Heart right ventricle (tissue), 16 donors: ENCODE measurements at regions of chr7 and their contacts with region 1.

Region 1: DNA sequence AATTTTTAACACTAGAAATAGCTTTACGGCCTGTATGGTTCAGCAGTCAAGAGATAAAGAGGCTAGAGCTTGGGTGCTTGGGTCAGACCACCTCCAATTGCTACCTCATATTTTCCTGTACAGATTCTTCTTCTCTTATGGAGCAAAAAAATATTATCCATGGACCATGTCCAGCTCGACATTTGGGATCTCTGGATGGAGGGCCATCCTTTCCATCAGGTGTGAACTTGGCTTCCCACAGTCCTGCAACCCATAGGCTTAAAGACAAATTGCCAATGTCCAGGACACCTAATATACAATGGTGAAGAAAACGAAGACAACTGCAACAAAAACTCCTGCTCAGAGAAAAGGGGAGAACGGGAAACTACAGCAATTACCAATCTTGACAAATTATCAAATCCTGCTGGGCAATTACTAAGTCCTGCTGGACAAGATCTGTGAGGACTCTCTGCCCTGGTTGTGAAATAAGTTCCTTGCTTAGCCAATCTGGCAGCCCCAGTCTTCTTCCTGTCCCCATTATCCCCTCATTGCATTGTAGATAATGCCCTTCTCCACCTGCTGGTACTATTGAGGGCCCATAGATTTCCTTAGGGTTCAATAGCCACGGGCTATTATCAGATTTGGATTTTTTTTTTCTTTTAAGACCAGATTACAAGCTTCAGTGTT is 42.0 kb upstream of the BRAF start:
- DNase-seq: no peak
- ATAC-seq: no peak
- H3K4me3 ChIP-seq: no peak overlapping the region
- H3K27ac ChIP-seq: no peak overlapping the region
- H3K4me1 ChIP-seq: no peaks in the 10 kb centered on the region
- H3K27me3 ChIP-seq: no peaks in the 10 kb centered on the region
- CTCF ChIP-seq: no peak

Region 2: DNA sequence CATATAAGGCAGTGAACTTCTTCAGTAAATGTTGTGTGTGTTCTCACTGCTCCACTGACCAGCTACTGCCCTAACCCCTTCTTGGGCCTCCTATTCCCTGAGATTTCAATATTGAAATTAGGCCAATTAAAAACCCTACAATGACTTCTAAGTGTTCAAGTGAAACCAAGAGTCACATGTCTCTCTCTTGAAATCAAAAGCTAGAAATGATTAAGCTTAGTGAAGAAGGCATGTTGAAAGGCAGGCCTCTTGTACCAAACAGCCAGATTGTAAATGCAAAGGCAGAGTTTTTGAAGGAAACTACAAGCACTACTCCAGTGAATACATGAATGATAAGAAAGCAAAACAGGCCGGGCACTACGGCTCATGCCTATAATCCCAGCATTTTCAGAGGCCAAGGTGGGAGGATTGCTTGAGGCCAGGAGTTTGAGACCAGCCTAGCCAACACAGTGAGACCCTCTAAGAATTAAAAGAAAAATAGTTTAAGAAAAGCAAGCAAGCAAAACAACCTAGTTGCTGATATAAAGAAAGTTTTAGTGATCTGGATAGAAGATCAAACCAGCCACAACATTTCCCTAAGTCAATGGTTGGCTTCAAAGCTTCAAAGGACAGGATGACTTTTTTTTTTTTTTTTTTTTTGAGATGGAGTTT is 64.3 kb before region 1 on chr7:
- intact Hi-C with region 1: loop called in 1 of 10 experiments (anchors 10 kb)
- DNase-seq: no peak
- ATAC-seq: no peak
- H3K4me3 ChIP-seq: no peak overlapping the region
- H3K27ac ChIP-seq: no peak overlapping the region
- H3K4me1 ChIP-seq: peaks cover 0 to 37% (median 17%) of the 10 kb centered on the region in 9 donors
- H3K27me3 ChIP-seq: no peaks in the 10 kb centered on the region
- CTCF ChIP-seq: no peak

Region 3: DNA sequence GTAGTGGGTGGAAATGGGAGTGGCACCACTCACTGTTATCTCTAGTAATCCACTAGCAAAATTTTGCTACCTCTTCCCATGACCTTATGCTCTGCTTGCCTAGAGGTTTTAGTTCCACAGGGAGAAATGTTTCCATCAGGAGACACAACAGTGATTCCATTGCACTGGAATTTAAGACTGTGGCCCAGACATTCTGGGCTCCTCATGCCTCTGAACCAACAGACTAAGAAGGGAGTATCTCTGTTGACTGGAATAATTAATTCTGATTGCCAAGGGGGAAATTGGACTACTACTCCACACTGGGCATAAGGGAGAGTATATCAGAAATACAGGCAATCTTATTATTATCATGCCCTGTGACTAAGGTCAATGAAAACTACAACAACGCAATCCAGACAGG is 25.8 kb before region 1 on chr7:
- intact Hi-C with region 1: no loop called
- DNase-seq: no peak
- ATAC-seq: no peak
- H3K4me3 ChIP-seq: no peak overlapping the region
- H3K27ac ChIP-seq: no peak overlapping the region
- H3K4me1 ChIP-seq: no peaks in the 10 kb centered on the region
- H3K27me3 ChIP-seq: no peaks in the 10 kb centered on the region
- CTCF ChIP-seq: no peak